CD14-positive monocyte (primary cell): ENCODE measurements at regions of chr12 and their contacts with region 1.

Region 1: DNA sequence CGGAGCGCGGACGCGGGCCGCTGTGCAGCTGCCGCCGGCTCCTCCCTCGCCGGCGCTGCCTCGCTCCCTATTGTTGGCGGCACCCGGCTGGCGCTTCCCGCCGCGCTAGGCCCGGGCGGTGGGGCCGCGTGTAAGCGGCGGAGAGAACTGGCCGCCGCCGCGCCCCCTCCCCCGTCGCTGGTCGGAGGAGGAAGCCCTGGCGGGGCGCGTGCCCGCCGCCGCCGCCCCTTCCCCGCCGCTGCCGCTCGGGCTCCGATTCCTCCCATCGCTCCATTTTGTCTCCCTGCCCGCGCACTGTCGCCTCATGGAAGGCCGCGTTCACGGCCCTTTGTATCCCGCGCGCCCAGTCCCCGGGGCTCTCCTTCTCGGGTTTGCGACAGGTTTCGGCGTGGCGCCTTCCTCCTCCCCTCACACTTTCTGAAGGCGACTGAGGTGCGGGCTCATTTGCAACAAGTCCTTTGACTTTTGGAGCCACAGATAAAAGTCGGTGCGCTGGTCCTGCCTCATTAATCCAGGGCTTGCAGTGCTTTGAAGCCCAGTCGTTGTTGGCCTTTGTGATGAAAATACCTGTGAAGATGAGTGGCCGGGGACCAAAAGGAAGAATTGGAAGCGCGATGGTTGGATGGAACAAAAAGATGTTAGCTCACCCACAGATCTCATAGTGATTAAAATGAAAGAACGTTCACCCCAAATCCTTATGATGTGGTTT is 707 bp downstream of the CPSF6 start:
- DNase-seq: peak; percentile 36 to 57 (median 43)
- H3K4me3 ChIP-seq: peak overlapping the region; percentile 74 to 97 (median 78)
- H3K4me3 Mint-ChIP-seq: peak overlapping the region; percentile 92 to 95
- H3K27ac ChIP-seq: peak overlapping the region; percentile 78 to 94
- H3K27ac Mint-ChIP-seq: peak overlapping the region; percentile 88 to 98 (median 95)
- H3K4me1 ChIP-seq: peaks cover 24 to 38% of the 10 kb centered on the region in 2 donors
- H3K4me1 Mint-ChIP-seq: peaks cover 35% of the 10 kb centered on the region
- H3K27me3 ChIP-seq: no peaks in the 10 kb centered on the region
- H3K27me3 Mint-ChIP-seq: peaks cover 0 to 2% (median 2%) of the 10 kb centered on the region in 3 donors
- CTCF ChIP-seq: no peak

Region 2: DNA sequence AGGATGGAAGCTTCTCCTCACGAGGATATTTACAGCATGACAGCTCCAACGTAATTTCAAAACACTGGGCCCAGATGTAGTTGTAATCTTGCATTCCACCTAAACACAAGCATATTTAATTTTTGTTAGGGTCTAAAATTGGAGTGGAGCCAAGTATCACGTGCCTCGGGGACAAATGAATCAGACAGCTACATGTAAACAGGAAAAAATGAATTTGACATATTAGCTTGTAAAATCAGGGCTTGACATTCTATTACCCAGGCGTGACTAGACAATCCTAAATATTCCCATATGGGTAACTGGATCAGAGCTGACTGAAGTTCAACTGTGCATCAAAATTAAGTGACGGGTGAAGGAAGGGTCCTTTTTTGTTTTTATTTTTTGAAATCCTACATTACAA is 373.1 kb before region 1 on chr12:
- intact Hi-C with region 1: loop called in 1 of 2 experiments (anchors 10 kb)
- DNase-seq: no peak
- H3K4me3 ChIP-seq: no peak overlapping the region
- H3K4me3 Mint-ChIP-seq: no peak overlapping the region
- H3K27ac ChIP-seq: no peak overlapping the region
- H3K27ac Mint-ChIP-seq: no peak overlapping the region
- H3K4me1 ChIP-seq: no peaks in the 10 kb centered on the region
- H3K4me1 Mint-ChIP-seq: no peaks in the 10 kb centered on the region
- H3K27me3 ChIP-seq: no peaks in the 10 kb centered on the region
- H3K27me3 Mint-ChIP-seq: no peaks in the 10 kb centered on the region
- CTCF ChIP-seq: no peak

Region 3: GRCh38 chr12:69157023-69157655 is 82.9 kb before region 1 on chr12:
- intact Hi-C with region 1: loop called in 1 of 2 experiments (anchors 10 kb)
- DNase-seq: peak; percentile 76 to 81 (median 77)
- H3K4me3 ChIP-seq: peak overlapping the region in 1 of 3 experiments; percentile 52
- H3K4me3 Mint-ChIP-seq: peak overlapping the region; percentile 63 to 66
- H3K27ac ChIP-seq: no peak overlapping the region
- H3K27ac Mint-ChIP-seq: peak overlapping the region in 1 of 7 donors; percentile 63
- H3K4me1 ChIP-seq: peaks cover 4 to 6% of the 10 kb centered on the region in 2 donors
- H3K4me1 Mint-ChIP-seq: peaks cover 14% of the 10 kb centered on the region
- H3K27me3 ChIP-seq: no peaks in the 10 kb centered on the region
- H3K27me3 Mint-ChIP-seq: peaks cover 2 to 6% (median 2%) of the 10 kb centered on the region in 3 donors
- CTCF ChIP-seq: peak; percentile 95

Region 4: DNA sequence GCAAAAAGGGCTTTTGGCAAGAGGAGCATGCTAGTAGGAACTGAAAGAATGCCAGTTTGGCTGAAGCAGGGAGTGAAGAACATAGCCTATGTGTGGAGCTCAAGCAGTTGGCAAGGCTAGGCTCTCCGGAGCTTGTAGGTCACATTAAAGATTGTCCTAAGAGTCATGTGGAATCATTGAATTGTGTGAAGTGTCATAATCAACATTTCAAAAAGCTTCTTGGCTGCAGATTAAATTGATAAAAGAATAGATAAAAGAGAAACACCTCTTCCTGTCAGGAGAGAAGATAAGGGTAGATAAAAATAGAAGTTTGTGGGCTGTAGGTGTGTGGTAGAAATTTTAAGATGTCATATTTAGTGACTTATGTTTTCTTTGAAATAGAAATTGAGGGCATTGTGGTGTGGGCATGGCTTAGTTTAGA is 35.4 kb after region 1 on chr12:
- intact Hi-C with region 1: no loop called
- DNase-seq: no peak
- H3K4me3 ChIP-seq: no peak overlapping the region
- H3K4me3 Mint-ChIP-seq: no peak overlapping the region
- H3K27ac ChIP-seq: no peak overlapping the region
- H3K27ac Mint-ChIP-seq: peak overlapping the region in 1 of 7 donors; percentile 49
- H3K4me1 ChIP-seq: no peaks in the 10 kb centered on the region
- H3K4me1 Mint-ChIP-seq: peaks cover 7% of the 10 kb centered on the region
- H3K27me3 ChIP-seq: no peaks in the 10 kb centered on the region
- H3K27me3 Mint-ChIP-seq: peaks cover 0 to 2% (median 0%) of the 10 kb centered on the region in 3 donors
- CTCF ChIP-seq: no peak